Activated B cell treated with CpG ODN at 0.5 μM for 24 hours (primary cell): ENCODE measurements at regions of chr5 and their contacts with region 1.

Region 1: DNA sequence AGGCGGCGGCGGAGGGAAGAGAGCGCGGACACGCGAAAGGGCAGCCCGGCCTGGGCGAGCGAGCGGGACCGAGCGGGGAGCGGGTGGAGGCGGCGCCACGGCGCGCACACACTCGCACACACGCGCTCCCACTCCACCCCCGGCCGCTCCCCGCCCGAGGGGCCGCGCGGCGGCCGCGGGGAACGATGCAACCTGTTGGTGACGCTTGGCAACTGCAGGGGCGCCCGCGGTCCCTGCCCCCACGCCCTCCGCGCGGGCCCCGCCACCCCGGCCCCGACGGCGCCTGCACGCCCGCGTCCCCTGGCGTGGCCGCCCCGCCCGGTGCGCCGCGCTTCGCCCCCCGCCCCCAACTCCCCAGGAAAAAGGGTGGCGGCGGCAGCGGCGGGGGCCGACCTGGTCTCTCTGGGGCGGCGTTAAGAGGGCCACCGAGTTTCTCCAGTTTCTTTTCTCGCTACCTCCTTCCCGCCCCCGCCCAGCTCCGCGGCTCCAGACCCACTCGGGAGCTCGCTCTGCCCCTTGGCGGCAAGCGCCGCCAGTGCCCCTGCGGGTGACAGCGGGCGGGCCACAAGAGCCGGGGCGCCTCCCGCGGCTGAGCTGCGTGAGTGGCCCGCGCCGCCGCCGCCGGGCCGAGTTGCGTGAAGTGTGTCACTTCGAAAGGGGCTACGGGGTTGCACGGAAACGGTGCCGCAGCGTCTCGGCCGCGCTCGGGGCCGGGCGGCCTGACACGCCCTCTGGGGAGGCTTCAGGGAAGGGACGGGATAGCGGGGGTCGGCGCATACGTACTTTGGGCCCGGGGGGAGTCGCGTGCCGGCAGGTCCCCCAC is at the start of gene NR3C1:
- DNase-seq: peak; percentile 87
- ATAC-seq: peak; percentile 72
- H3K4me3 Mint-ChIP-seq: peak within 1 kb of the TSS; percentile 95
- H3K27ac Mint-ChIP-seq: peak within 1 kb of the TSS; percentile 100
- H3K4me1 Mint-ChIP-seq: peaks cover 45% of the 10 kb centered on the region
- H3K27me3 Mint-ChIP-seq: no peaks in the 10 kb centered on the region
- CTCF ChIP-seq: no peak
- total RNA-seq, gene NR3C1: 105 and 110 TPM in 2 replicates

Region 2: DNA sequence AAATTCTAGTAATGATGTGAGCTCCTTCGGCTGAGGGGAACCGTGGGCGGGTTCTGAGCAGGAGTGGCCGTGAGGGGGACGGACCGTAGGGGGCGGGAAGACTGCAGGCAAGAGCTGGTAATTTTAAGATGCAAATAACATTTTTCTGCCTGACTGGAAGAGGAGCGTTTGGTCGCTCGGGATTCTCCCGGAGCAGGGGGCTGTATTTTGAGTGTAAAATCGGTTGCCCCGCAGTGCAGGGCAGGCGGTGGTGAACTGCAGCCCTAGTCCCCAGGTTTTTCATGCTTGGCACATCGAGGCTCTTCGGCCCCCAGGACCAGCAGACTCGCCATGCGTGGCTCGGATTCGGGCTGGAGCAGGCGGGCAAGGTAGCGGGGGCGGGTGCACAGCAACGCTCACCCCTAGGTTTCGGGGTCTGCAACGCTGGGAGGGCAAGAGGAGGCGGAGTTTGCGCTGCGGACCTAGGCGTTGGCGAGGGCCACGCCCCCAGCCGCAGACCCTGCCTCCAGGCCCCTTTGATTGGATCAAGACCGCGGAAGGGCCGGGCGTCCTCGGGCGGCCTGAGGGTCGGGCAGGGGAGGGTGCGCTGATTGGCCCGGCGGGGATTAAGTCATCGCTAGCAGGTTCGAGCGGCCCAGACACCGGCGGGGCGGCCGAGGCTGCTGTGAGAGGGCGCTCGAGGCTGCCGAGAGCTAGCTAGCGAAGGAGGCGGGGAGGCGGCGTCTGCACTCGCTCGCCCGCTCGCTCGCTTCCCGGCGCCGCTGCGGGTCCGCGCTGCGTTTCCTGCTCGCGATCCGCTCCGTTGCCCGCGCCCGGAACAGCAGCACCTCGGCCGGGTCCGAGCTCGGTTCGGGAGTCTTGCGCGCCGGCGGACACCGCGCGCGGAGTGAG is 633.8 kb before region 1 on chr5 and contains the start of gene ARHGAP26:
- CTCF ChIA-PET with region 1: no interaction called
- POLR2A ChIA-PET with region 1: no interaction called
- intact Hi-C with region 1: loop called (anchors 5 kb)
- DNase-seq: peak; percentile 89
- ATAC-seq: peak; percentile 95
- H3K4me3 Mint-ChIP-seq: peak within 1 kb of the TSS; percentile 97
- H3K27ac Mint-ChIP-seq: peak within 1 kb of the TSS; percentile 91
- H3K4me1 Mint-ChIP-seq: peaks cover 25% of the 10 kb centered on the region
- H3K27me3 Mint-ChIP-seq: no peaks in the 10 kb centered on the region
- CTCF ChIP-seq: no peak
- total RNA-seq, gene ARHGAP26: 14.0 and 20.9 TPM in 2 replicates

Region 3: DNA sequence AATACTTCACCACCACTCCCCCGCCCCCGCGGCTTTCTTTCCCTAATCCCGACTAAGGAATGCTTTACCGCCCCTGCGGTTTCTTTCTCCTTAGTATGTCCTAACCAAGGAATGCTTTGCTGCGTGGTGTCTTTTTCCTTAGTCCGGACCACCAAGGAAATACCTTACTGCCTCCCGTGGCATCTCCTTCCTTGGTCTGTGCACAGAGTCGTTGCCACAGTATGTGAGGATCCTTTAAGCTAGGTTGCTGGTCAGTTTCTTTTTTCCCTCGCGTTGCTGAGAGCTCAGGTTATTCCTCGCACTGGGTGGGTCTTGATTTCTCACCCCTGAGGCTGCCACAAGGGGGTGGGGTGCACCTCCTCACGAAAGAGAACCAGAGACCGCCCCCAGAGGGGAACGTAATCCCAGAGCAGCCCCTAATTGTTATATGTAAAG is 309.7 kb before region 1 on chr5:
- CTCF ChIA-PET with region 1: no interaction called
- POLR2A ChIA-PET with region 1: no interaction called
- intact Hi-C with region 1: loop called (anchors 5 kb)
- DNase-seq: no peak
- ATAC-seq: no peak
- H3K4me3 Mint-ChIP-seq: peak overlapping the region; percentile 35
- H3K27ac Mint-ChIP-seq: no peak overlapping the region
- H3K4me1 Mint-ChIP-seq: peaks cover 3% of the 10 kb centered on the region
- H3K27me3 Mint-ChIP-seq: no peaks in the 10 kb centered on the region
- CTCF ChIP-seq: no peak

Region 4: DNA sequence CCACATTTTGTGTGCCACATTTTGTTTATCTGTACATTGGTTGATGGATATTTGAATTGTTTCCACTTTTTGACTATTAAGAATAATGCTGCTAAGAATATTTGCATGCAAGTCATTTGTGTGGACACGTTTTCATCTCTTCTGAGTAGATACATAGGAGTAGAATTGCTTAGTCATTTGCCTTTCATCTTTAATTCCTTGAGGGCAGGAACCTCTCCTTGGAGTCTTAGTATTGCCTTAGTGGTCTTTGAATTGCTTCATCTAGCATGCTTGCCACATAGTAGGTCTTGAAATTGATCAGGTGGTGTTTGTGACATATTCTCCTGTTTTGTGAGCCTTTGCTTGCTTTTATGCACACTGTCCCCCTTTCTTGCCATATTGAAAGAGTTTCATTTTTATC is 128.9 kb before region 1 on chr5:
- CTCF ChIA-PET with region 1: no interaction called
- POLR2A ChIA-PET with region 1: no interaction called
- intact Hi-C with region 1: no loop called
- DNase-seq: no peak
- ATAC-seq: no peak
- H3K4me3 Mint-ChIP-seq: no peak overlapping the region
- H3K27ac Mint-ChIP-seq: no peak overlapping the region
- H3K4me1 Mint-ChIP-seq: no peaks in the 10 kb centered on the region
- H3K27me3 Mint-ChIP-seq: no peaks in the 10 kb centered on the region
- CTCF ChIP-seq: no peak

Region 5: DNA sequence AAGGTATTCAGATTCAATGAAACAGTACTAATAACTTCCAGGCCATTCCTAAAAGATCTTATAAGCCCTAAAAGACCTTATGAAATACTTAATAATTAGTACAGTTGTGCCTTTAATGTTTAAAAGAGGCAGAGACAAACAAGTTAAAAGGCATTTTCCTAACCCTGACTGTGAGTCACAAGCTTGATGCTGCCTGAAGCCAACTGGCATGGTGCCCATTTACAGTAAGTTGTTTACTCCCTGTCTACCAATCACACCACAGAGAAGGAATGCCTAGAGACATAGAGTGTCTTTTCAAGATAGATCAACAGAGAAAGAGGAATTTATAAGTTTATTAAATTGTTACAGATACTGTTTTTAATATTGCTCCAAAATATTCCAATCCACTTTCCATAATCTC is 48.1 kb before region 1 on chr5:
- CTCF ChIA-PET with region 1: interaction called, 3 read pairs
- POLR2A ChIA-PET with region 1: interaction called, 16 read pairs
- intact Hi-C with region 1: no loop called
- DNase-seq: no peak
- ATAC-seq: no peak
- H3K4me3 Mint-ChIP-seq: no peak overlapping the region
- H3K27ac Mint-ChIP-seq: peak overlapping the region; percentile 8
- H3K4me1 Mint-ChIP-seq: peaks cover 81% of the 10 kb centered on the region
- H3K27me3 Mint-ChIP-seq: no peaks in the 10 kb centered on the region
- CTCF ChIP-seq: no peak

Region 6: DNA sequence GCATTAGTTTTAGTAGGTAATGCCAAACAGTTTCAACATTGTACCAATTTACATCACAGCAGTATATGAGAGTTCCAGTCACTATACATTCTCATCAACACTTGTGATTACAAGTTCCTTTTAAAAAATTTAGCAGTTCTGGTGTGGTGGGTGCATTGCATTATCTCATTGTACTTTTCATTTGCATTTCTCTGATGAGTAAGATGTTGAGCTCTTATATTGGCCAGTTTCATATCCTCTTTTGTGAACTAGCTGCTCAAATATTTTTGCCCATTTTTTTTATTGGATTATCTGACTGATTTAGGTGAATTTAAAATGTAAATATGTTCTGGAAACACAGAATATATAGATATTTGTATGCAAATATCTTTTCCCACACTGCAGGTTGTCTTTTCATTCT is 160.6 kb after region 1 on chr5:
- CTCF ChIA-PET with region 1: no interaction called
- POLR2A ChIA-PET with region 1: interaction called, 7 read pairs
- intact Hi-C with region 1: loop called (anchors 1 kb)
- DNase-seq: no peak
- ATAC-seq: peak; percentile 91
- H3K4me3 Mint-ChIP-seq: peak overlapping the region; percentile 46
- H3K27ac Mint-ChIP-seq: peak overlapping the region; percentile 53
- H3K4me1 Mint-ChIP-seq: peaks cover 25% of the 10 kb centered on the region
- H3K27me3 Mint-ChIP-seq: no peaks in the 10 kb centered on the region
- CTCF ChIP-seq: no peak

Region 7: GRCh38 chr5:143733665-143734455 is 330.1 kb after region 1 on chr5:
- CTCF ChIA-PET with region 1: no interaction called
- POLR2A ChIA-PET with region 1: no interaction called
- intact Hi-C with region 1: no loop called
- DNase-seq: no peak
- ATAC-seq: no peak
- H3K4me3 Mint-ChIP-seq: no peak overlapping the region
- H3K27ac Mint-ChIP-seq: no peak overlapping the region
- H3K4me1 Mint-ChIP-seq: no peaks in the 10 kb centered on the region
- H3K27me3 Mint-ChIP-seq: no peaks in the 10 kb centered on the region
- CTCF ChIP-seq: no peak

Region 8: DNA sequence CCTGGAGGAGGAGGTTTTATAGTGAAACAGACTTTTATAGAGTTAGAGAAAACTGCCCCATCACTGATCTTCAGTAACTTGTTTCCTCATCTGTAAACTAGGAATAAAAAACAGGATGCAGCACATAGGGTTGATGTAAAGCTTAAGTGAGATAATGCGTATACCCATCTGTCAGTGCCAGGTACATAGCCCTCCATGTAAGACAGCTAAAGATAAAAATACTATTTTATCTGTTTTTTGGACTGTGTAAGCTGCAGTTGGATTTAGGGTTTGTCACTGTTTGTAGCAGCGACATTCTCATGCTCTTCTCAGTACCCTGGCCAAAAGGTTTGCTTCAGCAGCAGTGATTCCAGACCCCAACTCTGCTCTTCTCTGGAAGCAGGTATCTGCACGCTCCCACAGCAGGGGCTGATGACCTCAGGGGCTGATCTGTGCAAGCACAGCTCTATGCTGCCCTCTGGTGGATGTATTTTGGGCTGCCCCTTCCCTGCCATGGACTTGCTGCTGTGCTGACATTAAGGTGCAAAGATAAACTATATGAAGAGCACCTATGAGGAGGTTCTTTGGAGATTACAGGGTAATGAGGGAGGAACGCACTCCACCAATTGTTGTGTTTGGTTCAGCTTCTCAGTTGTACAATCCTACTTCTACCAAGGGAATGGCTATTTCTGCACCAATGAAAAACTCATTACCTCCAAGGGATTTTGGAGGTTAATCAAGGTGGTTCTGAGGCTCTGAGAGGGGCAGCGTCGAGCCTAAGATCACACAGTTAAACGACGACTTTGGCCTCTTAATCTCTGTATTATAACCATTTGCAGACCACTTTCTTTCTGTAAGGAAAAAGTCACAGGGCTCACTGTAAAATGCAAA is 421.3 kb after region 1 on chr5:
- CTCF ChIA-PET with region 1: interaction called, 23 read pairs
- POLR2A ChIA-PET with region 1: interaction called, 14 read pairs
- intact Hi-C with region 1: loop called (anchors 1 kb)
- DNase-seq: peak; percentile 70
- ATAC-seq: peak; percentile 99
- H3K4me3 Mint-ChIP-seq: no peak overlapping the region
- H3K27ac Mint-ChIP-seq: no peak overlapping the region
- H3K4me1 Mint-ChIP-seq: peaks cover 5% of the 10 kb centered on the region
- H3K27me3 Mint-ChIP-seq: no peaks in the 10 kb centered on the region
- CTCF ChIP-seq: peak; percentile 90